Heart right ventricle (tissue), 16 donors: ENCODE measurements at regions of chr7 and their contacts with region 1.

Region 1: GRCh38 chr7:13990984-13991790 is 1.7 kb upstream of the ETV1 start:
- DNase-seq: peak; percentile 93 to 99
- ATAC-seq: peak; percentile 95 to 98 (median 97)
- H3K4me3 ChIP-seq: peak overlapping the region; percentile 51 to 87 (median 69)
- H3K27ac ChIP-seq: peak overlapping the region; percentile 79 to 98 (median 93)
- H3K4me1 ChIP-seq: peaks cover 0 to 30% (median 9%) of the 10 kb centered on the region in 9 donors
- H3K27me3 ChIP-seq: no peaks in the 10 kb centered on the region
- CTCF ChIP-seq: peak in 4 of 9 donors; percentile 17 to 40 (median 27)

Region 2: DNA sequence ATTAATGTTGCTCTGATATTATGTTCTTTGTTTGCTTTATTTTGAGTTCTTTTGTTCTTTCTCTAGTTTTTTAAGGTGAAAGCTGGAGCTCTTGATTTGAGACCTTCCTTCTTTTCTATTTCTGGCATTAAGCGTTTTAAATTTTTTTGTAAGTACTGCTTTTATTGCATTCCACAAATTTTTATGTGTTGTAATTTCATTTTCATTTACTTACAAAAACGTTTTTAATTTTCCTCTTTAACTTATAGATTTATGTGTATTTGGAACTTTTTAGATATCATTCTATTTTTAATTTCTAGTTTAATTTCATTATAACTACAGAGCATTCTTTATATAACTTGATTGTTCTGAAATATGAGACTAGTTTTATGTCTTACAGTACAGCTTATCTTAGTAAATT is 397.3 kb before region 1 on chr7:
- intact Hi-C with region 1: no loop called
- DNase-seq: no peak
- ATAC-seq: no peak
- H3K4me3 ChIP-seq: no peak overlapping the region
- H3K27ac ChIP-seq: no peak overlapping the region
- H3K4me1 ChIP-seq: no peaks in the 10 kb centered on the region
- H3K27me3 ChIP-seq: no peaks in the 10 kb centered on the region
- CTCF ChIP-seq: no peak

Region 3: GRCh38 chr7:14197280-14197679 is 206.1 kb after region 1 on chr7:
- intact Hi-C with region 1: loop called in 2 of 10 experiments (anchors 5 to 10 kb)
- DNase-seq: peak in 1 of 2 donors; percentile 63
- ATAC-seq: peak in 6 of 8 donors; percentile 48 to 91 (median 66)
- H3K4me3 ChIP-seq: peak overlapping the region in 3 of 10 donors; percentile 1 to 19 (median 5)
- H3K27ac ChIP-seq: peak overlapping the region in 8 of 10 donors; percentile 28 to 59 (median 41)
- H3K4me1 ChIP-seq: peaks cover 2 to 27% (median 18%) of the 10 kb centered on the region in 9 donors
- H3K27me3 ChIP-seq: no peaks in the 10 kb centered on the region
- CTCF ChIP-seq: no peak

Region 4: DNA sequence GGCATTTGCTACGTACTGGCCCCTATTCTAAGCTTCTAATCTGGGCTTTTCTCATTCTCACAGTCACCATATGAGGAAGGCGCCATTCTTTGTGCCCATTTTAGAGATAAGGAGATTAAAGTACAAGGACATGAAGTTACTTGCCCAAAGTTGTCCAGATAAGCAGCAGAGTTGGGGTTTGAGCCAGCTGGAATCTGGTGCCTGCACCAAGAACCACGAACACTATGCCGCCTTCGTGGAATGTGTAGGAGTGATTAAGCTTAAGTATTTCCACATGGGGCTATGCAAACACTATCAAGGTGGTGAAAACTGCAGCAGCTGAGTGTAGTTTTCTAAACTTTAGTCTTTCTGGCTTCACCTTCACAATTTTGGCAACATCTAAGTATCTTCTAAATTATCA is 341.0 kb after region 1 on chr7:
- intact Hi-C with region 1: loop called in 1 of 10 experiments (anchors 5 kb)
- DNase-seq: peak; percentile 16 to 29
- ATAC-seq: peak in 6 of 8 donors; percentile 11 to 87 (median 62)
- H3K4me3 ChIP-seq: no peak overlapping the region
- H3K27ac ChIP-seq: no peak overlapping the region
- H3K4me1 ChIP-seq: peaks cover 0 to 6% (median 0%) of the 10 kb centered on the region in 9 donors
- H3K27me3 ChIP-seq: no peaks in the 10 kb centered on the region
- CTCF ChIP-seq: no peak

Region 5: GRCh38 chr7:14457568-14458453 is 466.6 kb after region 1 on chr7:
- intact Hi-C with region 1: loop called in 8 of 10 experiments (anchors 1 to 10 kb)
- DNase-seq: peak; percentile 41 to 73
- ATAC-seq: peak in 7 of 8 donors; percentile 55 to 87 (median 79)
- H3K4me3 ChIP-seq: peak overlapping the region in 4 of 10 donors; percentile 13 to 26 (median 18)
- H3K27ac ChIP-seq: peak overlapping the region in 1 of 10 donors; percentile 37
- H3K4me1 ChIP-seq: peaks cover 0 to 7% (median 0%) of the 10 kb centered on the region in 9 donors
- H3K27me3 ChIP-seq: no peaks in the 10 kb centered on the region
- CTCF ChIP-seq: peak; percentile 80 to 93 (median 89)